Natural killer cell (primary cell): ENCODE measurements at regions of chr1 and their contacts with region 1.

Region 1: DNA sequence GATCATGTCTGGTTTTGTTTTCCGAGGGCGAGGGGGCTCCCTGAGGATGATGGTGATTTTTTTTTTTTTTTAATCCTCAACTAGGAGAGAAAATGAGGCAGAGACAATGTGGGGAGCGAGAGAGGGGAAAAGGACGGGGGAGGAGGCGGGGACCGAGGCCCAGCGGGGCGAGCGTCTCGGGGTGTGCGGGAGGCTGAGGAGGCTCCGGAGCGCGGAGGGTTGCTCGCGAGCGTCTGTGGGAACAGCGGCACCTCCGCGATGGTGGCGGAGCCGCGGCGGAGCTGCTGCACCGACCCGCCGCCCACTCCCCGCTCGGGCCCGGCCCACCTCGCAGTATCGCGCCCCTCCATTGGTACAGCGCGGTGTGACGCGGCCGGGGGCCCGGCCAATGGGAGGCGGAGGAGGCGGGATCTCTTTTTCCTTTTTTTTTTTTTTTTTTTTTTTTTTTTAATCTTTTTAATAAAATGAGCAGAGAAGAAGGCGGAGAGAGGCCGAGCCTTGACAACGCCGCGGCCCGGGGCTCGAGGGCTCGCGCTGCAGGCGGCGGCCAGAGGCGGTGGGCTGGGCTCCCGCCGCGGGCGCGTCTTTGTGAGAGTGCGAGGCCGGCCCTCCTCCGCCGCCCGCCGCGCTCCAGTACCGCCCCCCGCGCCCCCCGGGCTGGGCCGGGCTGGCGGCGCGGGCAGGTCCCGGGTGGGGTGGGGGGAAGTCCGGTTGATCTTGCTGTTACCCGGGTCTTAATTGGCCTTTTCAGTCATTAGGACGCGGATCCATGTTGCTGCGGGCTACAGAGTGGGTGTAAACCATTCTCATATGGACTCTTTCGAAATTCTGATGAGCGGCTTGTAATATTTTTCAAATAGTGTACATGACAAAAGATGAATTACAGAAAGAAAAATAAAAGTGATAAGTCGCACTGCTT is at the start of gene RERE:
- DNase-seq: peak; percentile 97 to 98
- ATAC-seq: peak; percentile 92 to 99 (median 94)
- H3K4me3 ChIP-seq: peak within 1 kb of the TSS; percentile 99
- H3K4me3 Mint-ChIP-seq: peak within 1 kb of the TSS; percentile 94
- H3K27ac ChIP-seq: peak within 1 kb of the TSS; percentile 98
- H3K27ac Mint-ChIP-seq: peak within 1 kb of the TSS; percentile 92 to 95
- H3K4me1 ChIP-seq: peaks cover 2% of the 10 kb centered on the region
- H3K4me1 Mint-ChIP-seq: peaks cover 33 to 37% of the 10 kb centered on the region in 2 donors
- H3K27me3 ChIP-seq: no peaks in the 10 kb centered on the region
- H3K27me3 Mint-ChIP-seq: no peaks in the 10 kb centered on the region
- CTCF ChIP-seq: no peak
- total RNA-seq, gene RERE: 67.7 to 76.0 (median 73.0) TPM

Region 2: DNA sequence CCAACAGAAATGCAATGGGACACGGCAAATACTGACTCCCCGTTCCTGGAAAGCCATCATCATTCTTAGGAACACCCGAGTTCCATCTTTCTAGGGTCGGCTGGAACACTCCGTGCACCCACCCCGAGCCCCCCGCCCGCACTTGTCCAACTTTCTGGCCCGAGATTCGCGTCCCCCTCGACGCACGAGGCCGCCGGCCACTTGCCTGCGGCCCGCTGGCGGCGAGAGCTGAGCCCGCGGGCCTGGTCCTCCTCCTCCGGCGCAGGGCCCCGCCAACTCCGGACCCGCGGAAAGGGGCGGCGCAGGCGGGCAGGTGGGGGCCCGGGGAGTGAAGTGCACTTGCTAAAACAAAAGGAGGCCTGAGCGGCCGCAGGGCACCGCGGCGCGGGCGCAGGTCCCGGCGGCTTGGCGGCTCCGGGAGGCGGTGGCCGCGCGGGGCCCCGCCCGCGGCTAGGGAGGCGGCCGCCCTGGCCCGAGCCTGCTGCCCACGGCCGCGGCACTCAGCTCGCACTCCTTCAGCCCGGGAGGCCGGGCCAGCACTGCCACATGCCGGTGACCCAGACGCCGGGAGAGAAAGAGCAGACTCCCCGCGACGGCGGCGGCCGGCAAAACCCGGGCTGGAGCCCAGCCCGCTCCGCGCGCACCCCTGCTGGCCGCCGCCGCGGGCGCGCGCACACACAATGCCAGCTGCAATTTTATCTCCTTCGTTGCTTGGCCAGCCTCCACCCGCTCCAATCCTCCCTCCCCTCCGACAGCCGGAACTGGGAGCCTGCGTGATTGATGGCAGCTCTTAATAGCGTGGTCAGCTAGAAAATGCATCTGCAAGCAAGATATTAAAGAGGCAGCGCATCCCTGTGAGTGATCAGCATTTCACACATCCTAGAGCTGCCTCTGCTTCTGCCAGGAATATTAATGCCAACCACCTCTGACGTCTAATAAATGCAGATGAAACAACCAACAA is 114.5 kb before region 1 on chr1:
- intact Hi-C with region 1: loop called (anchors 5 kb)
- DNase-seq: peak; percentile 68 to 75
- ATAC-seq: peak; percentile 70 to 86 (median 77)
- H3K4me3 ChIP-seq: peak overlapping the region; percentile 39
- H3K4me3 Mint-ChIP-seq: peak overlapping the region; percentile 93
- H3K27ac ChIP-seq: no peak overlapping the region
- H3K27ac Mint-ChIP-seq: peak overlapping the region; percentile 81 to 90
- H3K4me1 ChIP-seq: peaks cover 22% of the 10 kb centered on the region
- H3K4me1 Mint-ChIP-seq: peaks cover 34 to 38% of the 10 kb centered on the region in 2 donors
- H3K27me3 ChIP-seq: peaks cover 4% of the 10 kb centered on the region
- H3K27me3 Mint-ChIP-seq: no peaks in the 10 kb centered on the region
- CTCF ChIP-seq: no peak

Region 3: DNA sequence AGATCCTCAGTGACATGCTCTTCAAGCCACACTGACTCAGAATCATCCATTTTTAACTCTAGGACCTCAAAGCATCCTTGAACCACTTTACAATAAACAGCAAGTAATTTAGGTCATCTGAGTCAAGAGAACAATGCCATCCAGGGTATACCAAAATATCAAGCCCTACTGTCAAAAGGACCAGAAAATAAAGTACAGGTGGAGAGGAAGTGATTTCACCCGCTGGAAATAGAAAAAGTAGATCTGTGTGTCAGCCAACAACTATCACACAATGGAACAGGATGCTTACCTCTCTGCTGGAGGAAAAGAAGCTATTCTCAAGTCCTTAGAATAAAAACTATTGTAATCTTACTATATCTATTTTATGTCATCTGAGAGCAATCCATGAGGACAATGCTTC is 37.3 kb before region 1 on chr1:
- intact Hi-C with region 1: no loop called
- DNase-seq: no peak
- ATAC-seq: no peak
- H3K4me3 ChIP-seq: no peak overlapping the region
- H3K4me3 Mint-ChIP-seq: no peak overlapping the region
- H3K27ac ChIP-seq: no peak overlapping the region
- H3K27ac Mint-ChIP-seq: no peak overlapping the region
- H3K4me1 ChIP-seq: no peaks in the 10 kb centered on the region
- H3K4me1 Mint-ChIP-seq: peaks cover 0 to 6% of the 10 kb centered on the region in 2 donors
- H3K27me3 ChIP-seq: no peaks in the 10 kb centered on the region
- H3K27me3 Mint-ChIP-seq: no peaks in the 10 kb centered on the region
- CTCF ChIP-seq: no peak

Region 4: GRCh38 chr1:8848663-8849386 is 31.2 kb after region 1 on chr1:
- intact Hi-C with region 1: loop called (anchors 1 kb)
- DNase-seq: peak; percentile 76 to 86
- ATAC-seq: peak; percentile 90 to 99 (median 98)
- H3K4me3 ChIP-seq: no peak overlapping the region
- H3K4me3 Mint-ChIP-seq: no peak overlapping the region
- H3K27ac ChIP-seq: no peak overlapping the region
- H3K27ac Mint-ChIP-seq: no peak overlapping the region
- H3K4me1 ChIP-seq: peaks cover 6% of the 10 kb centered on the region
- H3K4me1 Mint-ChIP-seq: no peaks in the 10 kb centered on the region
- H3K27me3 ChIP-seq: no peaks in the 10 kb centered on the region
- H3K27me3 Mint-ChIP-seq: no peaks in the 10 kb centered on the region
- CTCF ChIP-seq: peak; percentile 95